ENCODE measurements at regions of chr6 and their contacts with region 1.

Region 1: DNA sequence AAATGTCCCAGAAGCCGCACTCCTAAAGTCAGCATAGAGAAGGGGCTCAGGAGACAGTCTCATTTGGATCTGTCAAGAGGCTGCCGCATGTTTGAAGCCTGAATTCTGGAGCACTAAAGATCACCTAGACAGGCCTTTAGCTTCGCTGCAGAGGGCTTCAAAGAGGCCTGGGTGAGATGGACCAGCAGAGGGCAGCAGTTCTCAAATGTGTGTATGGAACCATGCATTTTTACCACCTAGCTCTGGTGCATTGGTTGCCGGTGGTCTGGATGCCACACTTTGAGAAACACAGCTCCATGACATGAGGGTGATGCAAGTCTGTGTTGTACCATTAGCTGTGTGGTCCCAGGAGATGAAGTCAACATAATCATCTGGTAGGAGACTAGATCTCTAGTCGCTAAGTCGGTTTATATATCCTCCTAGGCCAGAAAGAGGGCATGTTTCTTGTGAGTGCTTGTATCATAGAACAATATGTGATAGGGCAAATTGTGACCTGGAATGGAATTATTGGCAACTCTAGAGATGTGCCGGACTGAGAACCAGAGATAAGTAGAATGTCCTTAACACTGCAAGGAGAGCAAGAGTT is 64.8 kb downstream of the KIAA0319 start:
- DNase-seq: peak; percentile 76
- ATAC-seq: peak; percentile 97
- H3K4me3 ChIP-seq: no peak overlapping the region
- H3K27ac ChIP-seq: no peak overlapping the region
- H3K4me1 ChIP-seq: peaks cover 10% of the 10 kb centered on the region
- H3K27me3 ChIP-seq: peaks cover 0 to 22% of the 10 kb centered on the region in 2 experiments; a peak in 4 of 5 replicates
- CTCF ChIP-seq: peak; percentile 94
- EP300 ChIP-seq: no peak
- POLR2A ChIP-seq: no peak
- RAD21 ChIP-seq: peak; percentile 78

Region 2: GRCh38 chr6:24595512-24596217 is 14.5 kb after region 1 on chr6:
- CTCF ChIA-PET with region 1: no interaction called
- POLR2A ChIA-PET with region 1: no interaction called
- in situ Hi-C with region 1: no loop called
- intact Hi-C with region 1: no loop called
- DNase-seq: no peak
- ATAC-seq: peak; percentile 70
- H3K4me3 ChIP-seq: no peak overlapping the region; a peak in 1 of 6 replicates
- H3K27ac ChIP-seq: no peak overlapping the region
- H3K4me1 ChIP-seq: no peaks in the 10 kb centered on the region
- H3K27me3 ChIP-seq: peaks cover 0 to 3% of the 10 kb centered on the region in 2 experiments; a peak in 3 of 5 replicates
- CTCF ChIP-seq: no peak
- EP300 ChIP-seq: no peak
- POLR2A ChIP-seq: no peak
- RAD21 ChIP-seq: no peak

Region 3: GRCh38 chr6:24636681-24637080 is 55.5 kb after region 1 on chr6:
- CTCF ChIA-PET with region 1: no interaction called
- POLR2A ChIA-PET with region 1: no interaction called
- in situ Hi-C with region 1: no loop called
- intact Hi-C with region 1: no loop called
- DNase-seq: no peak
- ATAC-seq: no peak
- H3K4me3 ChIP-seq: no peak overlapping the region
- H3K27ac ChIP-seq: no peak overlapping the region
- H3K4me1 ChIP-seq: no peaks in the 10 kb centered on the region
- H3K27me3 ChIP-seq: no peaks in the 10 kb centered on the region; a peak in 1 of 5 replicates
- CTCF ChIP-seq: no peak
- EP300 ChIP-seq: no peak
- POLR2A ChIP-seq: no peak
- RAD21 ChIP-seq: no peak

Region 4: DNA sequence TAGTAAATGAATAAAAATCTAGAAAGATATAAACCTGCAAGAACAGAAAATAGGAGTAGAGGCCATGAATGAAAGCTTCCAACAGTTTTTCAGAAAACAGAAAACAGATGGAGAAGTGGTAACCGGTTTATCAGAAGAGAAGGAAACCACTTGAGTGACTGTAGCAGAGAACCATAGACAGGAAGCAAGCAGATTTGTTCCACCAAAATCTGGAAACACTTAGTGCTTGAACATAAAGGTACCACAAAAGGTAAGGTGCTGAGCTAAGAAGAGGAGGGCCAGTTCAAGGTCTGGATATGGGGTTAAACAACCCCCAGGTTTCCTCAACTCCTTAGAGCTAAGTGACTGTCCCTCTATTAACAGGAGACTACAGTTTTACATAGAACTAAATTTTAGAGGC is 74.0 kb after region 1 on chr6:
- CTCF ChIA-PET with region 1: no interaction called
- POLR2A ChIA-PET with region 1: no interaction called
- in situ Hi-C with region 1: no loop called
- intact Hi-C with region 1: no loop called
- DNase-seq: no peak
- ATAC-seq: no peak
- H3K4me3 ChIP-seq: no peak overlapping the region
- H3K27ac ChIP-seq: no peak overlapping the region
- H3K4me1 ChIP-seq: peaks cover 23% of the 10 kb centered on the region
- H3K27me3 ChIP-seq: no peaks in the 10 kb centered on the region
- CTCF ChIP-seq: no peak
- EP300 ChIP-seq: no peak
- POLR2A ChIP-seq: no peak
- RAD21 ChIP-seq: no peak

Region 5: GRCh38 chr6:24666641-24667377 is 85.6 kb after region 1 on chr6 and contains the starts of genes ACOT13 and TDP2:
- CTCF ChIA-PET with region 1: interaction called, 4 read pairs
- POLR2A ChIA-PET with region 1: interaction called, 9 read pairs
- in situ Hi-C with region 1: no loop called
- intact Hi-C with region 1: loop called (anchors 1 kb)
- DNase-seq: peak; percentile 98
- ATAC-seq: peak; percentile 95
- H3K4me3 ChIP-seq: peak within 1 kb of the TSS; percentile 82 to 95 (median 83)
- H3K27ac ChIP-seq: peak within 1 kb of the TSS; percentile 95
- H3K4me1 ChIP-seq: peaks cover 57% of the 10 kb centered on the region
- H3K27me3 ChIP-seq: no peaks in the 10 kb centered on the region; a peak in 1 of 5 replicates
- CTCF ChIP-seq: peak; percentile 76
- EP300 ChIP-seq: peak; percentile 67
- POLR2A ChIP-seq: peak; percentile 76 to 86
- RAD21 ChIP-seq: peak; percentile 90
- total RNA-seq, gene ACOT13: 31.5 and 50.9 TPM in 2 replicates
- total RNA-seq, gene TDP2: 42.6 and 73.1 TPM in 2 replicates

Region 6: DNA sequence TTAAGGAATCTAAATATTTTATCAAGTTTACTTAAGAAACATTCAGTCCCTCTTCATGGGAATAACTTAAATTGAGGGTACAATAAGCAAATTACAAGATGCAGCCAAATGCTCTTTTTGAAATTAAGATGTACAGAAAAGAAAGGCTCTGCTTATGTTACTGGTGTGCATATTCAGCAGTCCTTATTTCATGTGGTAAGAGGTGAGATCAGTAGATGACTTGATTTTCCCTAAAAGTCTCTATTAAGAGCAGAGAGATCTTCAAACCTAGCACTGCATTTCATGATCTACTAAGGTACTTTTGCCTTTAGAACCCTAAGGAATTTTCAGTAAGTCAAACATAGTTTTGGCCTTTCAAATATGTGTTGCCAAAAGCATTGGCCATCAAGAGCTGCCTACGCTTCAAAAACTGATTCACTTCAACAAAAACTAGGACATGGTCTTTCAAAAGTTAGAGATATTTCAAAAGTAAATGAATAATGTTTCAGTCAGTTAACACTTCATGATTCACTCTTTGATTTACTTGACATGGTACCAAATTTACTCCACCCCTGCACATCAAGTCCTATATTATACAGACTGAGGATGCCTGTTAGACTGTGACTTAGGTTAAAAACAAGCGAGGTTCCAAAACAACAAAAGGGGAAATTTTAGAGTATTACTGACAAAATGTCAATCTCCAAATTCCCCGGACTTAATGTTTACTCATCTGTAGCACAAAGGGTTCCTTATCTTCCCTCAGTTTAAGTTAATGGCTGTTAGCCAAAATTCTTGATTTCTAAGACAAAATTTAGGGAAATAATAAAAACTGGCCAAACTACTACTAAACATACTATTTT is 118.6 kb after region 1 on chr6:
- CTCF ChIA-PET with region 1: interaction called, 105 read pairs
- POLR2A ChIA-PET with region 1: no interaction called
- in situ Hi-C with region 1: loop called (anchors 5 kb)
- intact Hi-C with region 1: loop called (anchors 1 kb)
- DNase-seq: peak; percentile 21
- ATAC-seq: peak; percentile 5; the same call in 1 of the 3 replicates
- H3K4me3 ChIP-seq: no peak overlapping the region
- H3K27ac ChIP-seq: no peak overlapping the region
- H3K4me1 ChIP-seq: peaks cover 12% of the 10 kb centered on the region
- H3K27me3 ChIP-seq: no peaks in the 10 kb centered on the region
- CTCF ChIP-seq: no peak
- EP300 ChIP-seq: no peak
- POLR2A ChIP-seq: no peak
- RAD21 ChIP-seq: no peak

Region 7: GRCh38 chr6:25017932-25018567 is 436.9 kb after region 1 on chr6:
- CTCF ChIA-PET with region 1: no interaction called
- POLR2A ChIA-PET with region 1: no interaction called
- in situ Hi-C with region 1: no loop called
- intact Hi-C with region 1: loop called (anchors 1 kb)
- DNase-seq: peak; percentile 8
- ATAC-seq: no peak
- H3K4me3 ChIP-seq: no peak overlapping the region
- H3K27ac ChIP-seq: no peak overlapping the region
- H3K4me1 ChIP-seq: no peaks in the 10 kb centered on the region
- H3K27me3 ChIP-seq: peaks cover 0 to 3% of the 10 kb centered on the region in 2 experiments; a peak in 1 of 5 replicates
- CTCF ChIP-seq: peak; percentile 56
- EP300 ChIP-seq: no peak
- POLR2A ChIP-seq: no peak
- RAD21 ChIP-seq: no peak